HCT116 (cell line): ENCODE measurements at regions of chr9 and their contacts with region 1.

Region 1: GRCh38 chr9:136267261-136268111 is 21.9 kb upstream of the QSOX2 start:
- DNase-seq: peak; percentile 56
- ATAC-seq: peak; percentile 92
- H3K4me3 ChIP-seq: peak overlapping the region; percentile 62
- H3K27ac ChIP-seq: peak overlapping the region; percentile 34
- H3K4me1 ChIP-seq: peaks cover 3 to 19% of the 10 kb centered on the region in 2 experiments; a peak in 2 of 4 replicates
- H3K27me3 ChIP-seq: no peaks in the 10 kb centered on the region
- CTCF ChIP-seq: peak in 1 of 3 experiments; percentile 18; a peak in 2 of 6 replicates
- POLR2A ChIP-seq: peak; percentile 81
- RAD21 ChIP-seq: no peak

Region 2: DNA sequence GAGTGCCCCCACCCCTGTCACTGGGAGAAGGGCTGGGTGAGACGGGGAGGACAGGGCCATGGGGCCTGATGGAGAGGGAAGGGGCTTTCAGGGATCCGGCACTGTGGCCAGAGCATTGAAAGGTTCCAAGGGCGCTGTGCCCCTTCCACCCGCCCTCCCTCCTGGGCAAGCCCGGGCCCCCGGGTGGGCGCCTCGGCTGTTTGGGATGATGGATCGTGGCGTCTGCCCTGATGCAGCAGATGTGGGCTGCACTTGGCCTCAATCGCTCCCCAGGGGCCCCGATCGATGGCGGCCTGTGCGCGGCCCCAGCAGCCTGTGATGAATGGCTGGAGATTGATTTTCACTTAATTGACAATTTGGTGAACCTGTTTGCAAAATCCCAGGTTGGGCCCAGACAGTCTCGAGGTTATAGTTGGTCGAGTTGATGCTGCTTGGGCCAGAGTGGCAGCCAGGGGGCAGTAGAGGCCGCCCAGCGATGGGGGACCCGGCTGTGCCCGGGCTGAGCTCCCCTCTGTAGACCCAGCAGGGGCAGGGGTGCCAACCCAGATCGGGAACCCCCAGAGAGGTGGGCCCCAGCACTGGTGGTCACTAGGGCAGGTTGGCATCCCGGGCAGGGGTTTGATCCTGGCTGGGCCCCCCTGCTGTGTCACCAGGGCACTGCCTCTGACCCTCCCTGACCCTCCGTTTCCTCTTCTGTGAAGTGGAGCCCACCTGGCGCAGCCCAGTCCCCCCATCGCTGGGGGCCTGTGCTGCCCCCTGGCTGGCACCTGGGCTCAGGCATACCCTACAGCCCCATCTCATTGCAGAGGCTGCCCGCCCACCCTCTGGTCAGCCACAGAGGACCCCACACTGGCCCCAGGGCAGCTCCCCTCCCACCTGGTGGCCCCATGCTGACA is 97.2 kb before region 1 on chr9:
- CTCF ChIA-PET with region 1: interaction called, 6 read pairs
- POLR2A ChIA-PET with region 1: no interaction called
- RAD21 ChIA-PET with region 1: interaction called in 1 of 2 experiments, 3 read pairs
- intact Hi-C with region 1: loop called (anchors 5 kb)
- DNase-seq: no peak
- ATAC-seq: peak; percentile 95
- H3K4me3 ChIP-seq: no peak overlapping the region
- H3K27ac ChIP-seq: no peak overlapping the region
- H3K4me1 ChIP-seq: peaks cover 0 to 8% of the 10 kb centered on the region in 2 experiments; a peak in 1 of 4 replicates
- H3K27me3 ChIP-seq: no peaks in the 10 kb centered on the region
- CTCF ChIP-seq: peak; percentile 78 to 94 (median 94); a peak in 5 of 6 replicates
- POLR2A ChIP-seq: no peak
- RAD21 ChIP-seq: peak; percentile 88

Region 3: GRCh38 chr9:136412962-136413361 is 145.5 kb after region 1 on chr9:
- CTCF ChIA-PET with region 1: no interaction called
- POLR2A ChIA-PET with region 1: no interaction called
- RAD21 ChIA-PET with region 1: no interaction called
- intact Hi-C with region 1: no loop called
- DNase-seq: no peak
- ATAC-seq: no peak
- H3K4me3 ChIP-seq: no peak overlapping the region
- H3K27ac ChIP-seq: no peak overlapping the region
- H3K4me1 ChIP-seq: peaks cover 12 to 25% of the 10 kb centered on the region in 2 experiments
- H3K27me3 ChIP-seq: no peaks in the 10 kb centered on the region
- CTCF ChIP-seq: no peak
- POLR2A ChIP-seq: no peak
- RAD21 ChIP-seq: no peak

Region 4: DNA sequence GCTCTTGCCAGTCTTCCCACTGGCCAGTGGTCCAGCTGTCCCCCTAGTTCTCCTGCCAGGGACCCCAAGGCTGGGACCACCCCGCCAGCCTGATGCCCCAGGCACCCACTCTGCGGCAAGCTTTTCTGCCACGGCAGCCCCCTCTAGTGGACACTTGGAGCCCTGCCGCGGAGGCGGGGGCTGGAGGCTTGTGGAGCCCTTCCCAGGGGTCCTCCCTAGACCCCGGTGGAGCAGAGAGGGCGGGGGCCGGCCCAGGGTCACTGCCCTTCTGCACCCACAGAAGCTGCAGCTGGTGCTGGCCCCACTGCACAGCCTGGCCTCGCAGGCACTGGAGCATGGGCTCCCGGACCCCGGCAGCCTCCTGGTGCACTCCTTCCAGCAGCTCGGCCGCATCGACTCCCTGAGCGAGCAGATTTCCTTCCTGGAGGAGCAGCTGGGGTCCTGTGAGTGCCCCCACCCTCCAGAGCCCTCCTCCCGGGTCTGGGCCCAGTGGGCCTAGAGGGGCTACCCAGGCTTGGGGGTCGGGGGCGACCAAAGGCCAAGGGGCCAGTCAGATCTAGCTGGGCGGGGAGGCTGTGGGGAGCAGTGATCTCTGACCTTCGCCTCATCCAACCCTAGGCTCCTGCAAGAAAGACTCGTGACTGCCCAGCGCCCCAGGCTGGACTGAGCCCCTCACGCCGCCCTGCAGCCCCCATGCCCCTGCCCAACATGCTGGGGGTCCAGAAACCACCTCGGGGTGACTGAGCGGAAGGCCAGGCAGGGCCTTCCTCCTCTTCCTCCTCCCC is 404.4 kb after region 1 on chr9:
- CTCF ChIA-PET with region 1: no interaction called
- POLR2A ChIA-PET with region 1: no interaction called
- RAD21 ChIA-PET with region 1: no interaction called
- intact Hi-C with region 1: no loop called
- DNase-seq: no peak
- ATAC-seq: peak; percentile 67
- H3K4me3 ChIP-seq: no peak overlapping the region
- H3K27ac ChIP-seq: no peak overlapping the region; the same call in 1 of the 2 replicates
- H3K4me1 ChIP-seq: peaks cover 0 to 37% of the 10 kb centered on the region in 2 experiments; a peak in 2 of 4 replicates
- H3K27me3 ChIP-seq: no peaks in the 10 kb centered on the region
- CTCF ChIP-seq: peak in 2 of 3 experiments; percentile 87 to 95; a peak in 4 of 6 replicates
- POLR2A ChIP-seq: no peak
- RAD21 ChIP-seq: no peak